ENCODE measurements at regions of chr10 and their contacts with region 1.

Region 1: GRCh38 chr10:35119378-35119777 is 7.3 kb upstream of the CREM start:
- DNase-seq: no peak
- H3K4me3 Mint-ChIP-seq: no peak overlapping the region
- H3K27ac Mint-ChIP-seq: no peak overlapping the region
- H3K4me1 Mint-ChIP-seq: peaks cover 14% of the 10 kb centered on the region
- H3K27me3 Mint-ChIP-seq: peaks cover 3% of the 10 kb centered on the region

Region 2: GRCh38 chr10:34994565-34995142 is 124.7 kb before region 1 on chr10:
- CTCF ChIA-PET with region 1: interaction called, 10 read pairs
- POLR2A ChIA-PET with region 1: no interaction called
- DNase-seq: peak; percentile 56
- H3K4me3 Mint-ChIP-seq: no peak overlapping the region
- H3K27ac Mint-ChIP-seq: no peak overlapping the region
- H3K4me1 Mint-ChIP-seq: peaks cover 10% of the 10 kb centered on the region
- H3K27me3 Mint-ChIP-seq: no peaks in the 10 kb centered on the region

Region 3: DNA sequence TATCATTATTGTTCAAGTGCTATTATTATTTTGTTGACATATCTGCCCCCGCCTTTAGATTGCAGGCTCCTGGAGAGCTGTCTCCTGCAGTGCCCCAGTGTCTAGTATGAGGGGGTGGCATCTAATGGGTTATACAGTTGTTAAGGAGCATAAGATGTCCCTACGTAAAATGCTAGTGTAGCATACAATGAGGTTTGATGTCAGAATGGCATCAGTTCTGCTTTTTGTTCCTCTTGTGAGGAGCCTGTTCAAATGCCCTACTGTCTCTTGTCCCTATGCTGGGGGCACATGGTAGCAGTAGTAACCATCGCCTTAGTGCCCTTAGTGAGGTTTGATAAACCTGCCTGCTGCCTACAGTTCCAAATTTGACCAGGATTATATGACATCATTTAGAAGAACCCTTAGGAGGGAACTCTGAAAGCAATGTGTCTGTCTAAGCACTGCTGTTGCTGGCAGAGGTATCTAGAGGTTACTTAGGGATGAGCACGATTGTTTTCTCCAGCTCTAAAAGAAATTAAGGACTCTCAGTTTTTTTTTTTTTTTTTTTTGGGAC is 17.0 kb after region 1 on chr10:
- CTCF ChIA-PET with region 1: no interaction called
- POLR2A ChIA-PET with region 1: no interaction called
- DNase-seq: no peak
- H3K4me3 Mint-ChIP-seq: peak overlapping the region; percentile 62
- H3K27ac Mint-ChIP-seq: peak overlapping the region; percentile 85
- H3K4me1 Mint-ChIP-seq: peaks cover 53% of the 10 kb centered on the region
- H3K27me3 Mint-ChIP-seq: no peaks in the 10 kb centered on the region

Region 4: GRCh38 chr10:35218339-35218955 is 99.1 kb after region 1 on chr10:
- CTCF ChIA-PET with region 1: interaction called, 216 read pairs
- POLR2A ChIA-PET with region 1: interaction called, 23 read pairs
- DNase-seq: peak; percentile 88
- H3K4me3 Mint-ChIP-seq: peak overlapping the region; percentile 51
- H3K27ac Mint-ChIP-seq: peak overlapping the region; percentile 76
- H3K4me1 Mint-ChIP-seq: peaks cover 55% of the 10 kb centered on the region
- H3K27me3 Mint-ChIP-seq: no peaks in the 10 kb centered on the region

Region 5: DNA sequence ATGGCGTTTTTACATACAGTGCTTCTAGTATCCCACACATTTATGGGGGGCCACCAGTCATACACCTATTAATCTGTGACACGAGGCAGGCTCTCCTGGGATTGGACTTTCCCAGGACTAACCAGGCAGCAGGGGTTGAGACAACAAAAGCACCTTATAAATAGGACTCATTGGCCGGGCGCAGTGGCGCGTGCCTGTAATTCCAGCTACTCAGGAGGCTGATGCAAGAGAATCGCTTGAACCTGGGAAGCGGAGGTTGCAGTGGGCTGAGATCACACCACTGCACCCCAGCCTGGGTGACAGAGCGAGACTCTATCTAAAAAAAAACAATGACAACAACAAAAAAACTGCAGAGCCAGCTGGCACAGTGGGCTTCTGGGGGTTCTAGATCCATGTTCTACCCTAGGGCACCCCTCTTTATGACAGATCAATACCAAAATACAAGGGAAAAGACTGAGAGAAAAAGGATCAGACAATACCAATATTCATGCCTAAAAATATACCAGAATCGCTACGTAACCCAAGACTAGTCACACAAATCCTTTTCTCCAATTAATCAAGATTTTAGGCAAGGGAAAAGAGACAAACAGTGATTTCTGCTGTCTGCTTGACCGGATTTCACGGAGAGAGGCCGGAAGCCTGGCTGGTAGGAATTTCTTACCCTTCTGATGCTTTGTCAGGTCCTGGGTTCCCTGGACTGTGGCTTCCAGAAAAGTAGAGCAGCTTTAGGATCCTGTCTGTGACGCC is 118.6 kb after region 1 on chr10:
- CTCF ChIA-PET with region 1: interaction called, 25 read pairs
- POLR2A ChIA-PET with region 1: no interaction called
- DNase-seq: no peak
- H3K4me3 Mint-ChIP-seq: no peak overlapping the region
- H3K27ac Mint-ChIP-seq: no peak overlapping the region
- H3K4me1 Mint-ChIP-seq: no peaks in the 10 kb centered on the region
- H3K27me3 Mint-ChIP-seq: no peaks in the 10 kb centered on the region